Activated naive CD4-positive, alpha-beta T cell treated with anti-CD3 and anti-CD28 coated beads for 36 hours (primary cell): ENCODE measurements at regions of chr1 and their contacts with region 1.

Region 1: DNA sequence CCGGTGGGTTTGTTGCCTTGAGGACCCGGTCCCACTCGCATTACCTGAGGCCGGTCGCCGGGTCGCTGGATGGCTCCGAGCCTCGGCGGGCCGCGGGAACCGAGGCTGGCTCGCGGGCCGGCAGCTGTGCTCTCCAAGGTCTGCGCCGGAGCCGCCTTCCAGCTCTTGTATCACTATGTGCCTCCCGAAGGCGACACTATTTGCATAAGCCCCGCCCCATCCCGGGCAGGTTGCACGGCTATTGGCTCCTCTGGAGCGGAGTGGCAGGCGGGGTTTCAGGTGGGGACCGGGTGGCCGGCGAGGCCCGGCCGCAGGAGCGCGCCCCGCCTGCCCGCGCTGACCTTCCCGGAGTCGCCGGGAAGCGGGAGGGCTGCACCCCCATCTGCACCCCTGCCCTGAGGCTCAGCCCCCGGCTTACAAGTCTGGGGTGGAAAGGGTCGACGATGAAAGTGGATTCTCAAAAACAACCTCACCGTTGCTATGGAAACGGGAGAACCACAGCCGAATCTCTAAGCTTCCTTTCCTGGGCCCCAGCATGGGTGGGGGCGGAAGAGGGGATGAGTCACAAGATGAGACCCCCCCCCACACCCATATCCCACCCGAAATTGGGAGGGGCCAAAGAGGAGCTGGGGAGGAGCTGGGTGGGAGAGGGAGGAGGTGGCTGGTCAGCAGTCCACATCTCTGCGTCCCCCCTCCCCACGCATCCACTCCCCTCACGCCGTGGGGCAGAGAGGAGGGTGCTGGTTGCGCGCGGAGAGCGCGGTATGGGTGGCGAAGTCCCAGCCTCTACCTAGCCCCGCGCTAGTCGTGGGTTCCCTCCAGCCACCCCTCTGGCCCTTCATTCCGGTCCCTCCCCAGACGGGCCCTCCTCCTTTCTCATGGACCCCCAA is at the start of gene HPCAL4:
- DNase-seq: peak; percentile 87
- H3K4me3 Mint-ChIP-seq: peak within 1 kb of the TSS; percentile 71
- H3K27ac Mint-ChIP-seq: no peak within 1 kb of the TSS
- H3K4me1 Mint-ChIP-seq: peaks cover 48% of the 10 kb centered on the region
- H3K27me3 Mint-ChIP-seq: peaks cover 9% of the 10 kb centered on the region
- total RNA-seq, gene HPCAL4: 0.43 to 0.52 TPM

Region 2: GRCh38 chr1:39666772-39667171 is 24.7 kb before region 1 on chr1:
- CTCF ChIA-PET with region 1: interaction called, 12 read pairs
- intact Hi-C with region 1: loop called (anchors 1 kb)
- DNase-seq: peak; percentile 77
- H3K4me3 Mint-ChIP-seq: no peak overlapping the region
- H3K27ac Mint-ChIP-seq: peak overlapping the region; percentile 42
- H3K4me1 Mint-ChIP-seq: peaks cover 23% of the 10 kb centered on the region
- H3K27me3 Mint-ChIP-seq: peaks cover 32% of the 10 kb centered on the region

Region 3: DNA sequence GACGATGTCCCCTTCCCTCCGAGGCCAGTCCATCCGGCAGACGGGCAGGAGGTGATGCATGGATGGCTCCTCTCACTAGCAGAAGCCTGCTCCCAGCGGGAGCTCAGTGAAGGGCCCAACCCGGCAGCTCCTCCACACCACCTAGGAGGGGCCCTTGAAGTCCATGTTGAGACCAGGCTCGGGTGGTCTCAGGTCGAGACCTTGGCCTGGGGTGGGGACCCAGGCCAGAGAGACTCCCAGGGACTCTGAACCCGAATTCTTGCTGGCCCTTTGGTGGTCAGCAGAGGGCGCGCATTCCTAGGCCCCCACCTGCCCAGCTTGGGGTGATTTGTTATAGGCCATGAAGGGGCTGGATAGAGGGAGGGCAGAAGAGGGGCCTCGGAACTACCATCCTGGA is 19.0 kb before region 1 on chr1:
- CTCF ChIA-PET with region 1: interaction called, 12 read pairs
- intact Hi-C with region 1: loop called (anchors 1 kb)
- DNase-seq: peak; percentile 54
- H3K4me3 Mint-ChIP-seq: peak overlapping the region; percentile 17
- H3K27ac Mint-ChIP-seq: no peak overlapping the region
- H3K4me1 Mint-ChIP-seq: peaks cover 6% of the 10 kb centered on the region
- H3K27me3 Mint-ChIP-seq: peaks cover 35% of the 10 kb centered on the region

Region 4: DNA sequence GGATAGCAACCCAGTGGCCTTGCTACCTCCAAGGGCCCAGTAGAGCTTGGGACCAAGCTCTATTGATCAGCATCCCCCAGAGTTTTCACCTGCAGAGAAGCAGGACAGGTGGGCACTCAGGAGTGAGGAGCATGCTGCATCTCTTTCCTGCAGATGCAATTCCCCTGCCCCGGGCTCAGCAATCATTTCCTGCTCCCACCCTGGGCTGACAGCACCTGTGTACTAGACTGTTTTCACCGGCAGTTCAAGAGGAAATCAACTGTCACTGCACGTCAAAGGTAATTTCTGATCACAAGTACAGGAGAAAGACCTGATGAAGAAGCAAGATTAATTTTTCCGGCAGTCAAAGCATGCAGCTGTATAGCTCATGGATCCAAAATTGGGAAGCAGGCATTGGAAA is 10.8 kb before region 1 on chr1:
- CTCF ChIA-PET with region 1: interaction called, 4 read pairs
- intact Hi-C with region 1: loop called (anchors 1 kb)
- DNase-seq: no peak
- H3K4me3 Mint-ChIP-seq: no peak overlapping the region
- H3K27ac Mint-ChIP-seq: no peak overlapping the region
- H3K4me1 Mint-ChIP-seq: peaks cover 29% of the 10 kb centered on the region
- H3K27me3 Mint-ChIP-seq: peaks cover 5% of the 10 kb centered on the region

Region 5: GRCh38 chr1:39816415-39817090 is 125.0 kb after region 1 on chr1:
- CTCF ChIA-PET with region 1: no interaction called
- intact Hi-C with region 1: no loop called
- DNase-seq: peak; percentile 73
- H3K4me3 Mint-ChIP-seq: peak overlapping the region; percentile 15
- H3K27ac Mint-ChIP-seq: no peak overlapping the region
- H3K4me1 Mint-ChIP-seq: peaks cover 10% of the 10 kb centered on the region
- H3K27me3 Mint-ChIP-seq: peaks cover 3% of the 10 kb centered on the region

Region 6: GRCh38 chr1:39866767-39867166 is 175.3 kb after region 1 on chr1:
- CTCF ChIA-PET with region 1: no interaction called
- intact Hi-C with region 1: no loop called
- DNase-seq: no peak
- H3K4me3 Mint-ChIP-seq: no peak overlapping the region
- H3K27ac Mint-ChIP-seq: no peak overlapping the region
- H3K4me1 Mint-ChIP-seq: no peaks in the 10 kb centered on the region
- H3K27me3 Mint-ChIP-seq: no peaks in the 10 kb centered on the region